PC-9 (cell line): ENCODE measurements at regions of chr2 and their contacts with region 1.

Region 1: GRCh38 chr2:171999604-172000469 is at the start of gene METAP1D:
- DNase-seq: peak; percentile 91 to 100
- H3K4me3 ChIP-seq: peak within 1 kb of the TSS; percentile 65
- H3K27ac ChIP-seq: peak within 1 kb of the TSS; percentile 77
- H3K4me1 ChIP-seq: peaks cover 17% of the 10 kb centered on the region
- H3K27me3 ChIP-seq: no peaks in the 10 kb centered on the region
- CTCF ChIP-seq: no peak; the same call in 1 of the 2 replicates
- total RNA-seq, gene METAP1D: 21.5 and 32.4 TPM in 2 replicates

Region 2: GRCh38 chr2:171922230-171923022 is 77.4 kb before region 1 on chr2 and contains the start of gene HAT1:
- CTCF ChIA-PET with region 1: no interaction called
- POLR2A ChIA-PET with region 1: interaction called, 4 read pairs
- intact Hi-C with region 1: loop called (anchors 1 kb)
- DNase-seq: peak; percentile 98 to 100
- H3K4me3 ChIP-seq: peak within 1 kb of the TSS; percentile 68
- H3K27ac ChIP-seq: peak within 1 kb of the TSS; percentile 52
- H3K4me1 ChIP-seq: peaks cover 25% of the 10 kb centered on the region
- H3K27me3 ChIP-seq: no peaks in the 10 kb centered on the region
- CTCF ChIP-seq: no peak
- total RNA-seq, gene HAT1: 96.4 and 132 TPM in 2 replicates

Region 3: GRCh38 chr2:172013396-172013795 is 13.6 kb after region 1 on chr2:
- CTCF ChIA-PET with region 1: interaction called, 17 read pairs
- POLR2A ChIA-PET with region 1: no interaction called
- intact Hi-C with region 1: loop called (anchors 1 kb)
- DNase-seq: no peak
- H3K4me3 ChIP-seq: no peak overlapping the region
- H3K27ac ChIP-seq: no peak overlapping the region
- H3K4me1 ChIP-seq: peaks cover 7% of the 10 kb centered on the region
- H3K27me3 ChIP-seq: no peaks in the 10 kb centered on the region
- CTCF ChIP-seq: no peak

Region 4: GRCh38 chr2:172021955-172022354 is 22.1 kb after region 1 on chr2:
- CTCF ChIA-PET with region 1: no interaction called
- POLR2A ChIA-PET with region 1: interaction called, 18 read pairs
- intact Hi-C with region 1: loop called (anchors 2 kb)
- DNase-seq: peak in 1 of 2 experiments; percentile 34
- H3K4me3 ChIP-seq: no peak overlapping the region
- H3K27ac ChIP-seq: peak overlapping the region; percentile 32
- H3K4me1 ChIP-seq: peaks cover 24% of the 10 kb centered on the region
- H3K27me3 ChIP-seq: no peaks in the 10 kb centered on the region
- CTCF ChIP-seq: no peak

Region 5: GRCh38 chr2:172046080-172046678 is 46.3 kb after region 1 on chr2:
- CTCF ChIA-PET with region 1: no interaction called
- POLR2A ChIA-PET with region 1: interaction called, 10 read pairs
- intact Hi-C with region 1: no loop called
- DNase-seq: no peak
- H3K4me3 ChIP-seq: no peak overlapping the region
- H3K27ac ChIP-seq: peak overlapping the region; percentile 7
- H3K4me1 ChIP-seq: peaks cover 12% of the 10 kb centered on the region; the same call in 1 of the 2 replicates
- H3K27me3 ChIP-seq: no peaks in the 10 kb centered on the region
- CTCF ChIP-seq: no peak

Region 6: DNA sequence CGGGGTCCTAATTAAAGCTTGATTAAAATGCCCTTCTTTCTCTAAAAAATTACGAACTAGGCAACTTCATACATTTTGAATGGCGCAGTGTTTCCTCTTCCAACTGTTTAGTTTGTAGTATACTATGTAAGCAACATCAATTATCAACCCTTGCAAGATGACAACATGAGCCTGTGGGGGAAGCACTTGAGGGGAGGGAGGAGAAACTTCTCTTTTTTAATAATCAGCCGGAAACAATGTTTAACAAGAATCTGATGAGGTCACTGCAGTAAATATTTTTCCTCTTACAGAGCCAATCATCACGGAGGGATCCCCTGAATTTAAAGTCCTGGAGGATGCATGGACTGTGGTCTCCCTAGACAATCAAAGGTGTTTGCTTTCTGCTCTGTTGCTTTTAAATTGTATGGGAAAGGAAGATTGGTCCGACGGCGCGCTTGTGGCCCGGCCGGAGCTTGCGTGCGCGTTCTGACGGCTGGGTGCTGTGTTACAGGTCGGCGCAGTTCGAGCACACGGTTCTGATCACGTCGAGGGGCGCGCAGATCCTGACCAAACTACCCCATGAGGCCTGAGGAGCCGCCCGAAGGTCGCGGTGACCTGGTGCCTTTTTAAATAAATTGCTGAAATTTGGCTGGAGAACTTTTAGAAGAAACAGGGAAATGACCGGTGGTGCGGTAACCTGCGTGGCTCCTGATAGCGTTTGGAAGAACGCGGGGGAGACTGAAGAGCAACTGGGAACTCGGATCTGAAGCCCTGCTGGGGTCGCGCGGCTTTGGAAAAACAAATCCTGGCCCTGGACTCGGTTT is 80.2 kb after region 1 on chr2:
- CTCF ChIA-PET with region 1: interaction called, 15 read pairs
- POLR2A ChIA-PET with region 1: no interaction called
- intact Hi-C with region 1: no loop called
- DNase-seq: no peak
- H3K4me3 ChIP-seq: no peak overlapping the region
- H3K27ac ChIP-seq: no peak overlapping the region
- H3K4me1 ChIP-seq: peaks cover 13% of the 10 kb centered on the region; the same call in 1 of the 2 replicates
- H3K27me3 ChIP-seq: no peaks in the 10 kb centered on the region
- CTCF ChIP-seq: no peak

Region 7: DNA sequence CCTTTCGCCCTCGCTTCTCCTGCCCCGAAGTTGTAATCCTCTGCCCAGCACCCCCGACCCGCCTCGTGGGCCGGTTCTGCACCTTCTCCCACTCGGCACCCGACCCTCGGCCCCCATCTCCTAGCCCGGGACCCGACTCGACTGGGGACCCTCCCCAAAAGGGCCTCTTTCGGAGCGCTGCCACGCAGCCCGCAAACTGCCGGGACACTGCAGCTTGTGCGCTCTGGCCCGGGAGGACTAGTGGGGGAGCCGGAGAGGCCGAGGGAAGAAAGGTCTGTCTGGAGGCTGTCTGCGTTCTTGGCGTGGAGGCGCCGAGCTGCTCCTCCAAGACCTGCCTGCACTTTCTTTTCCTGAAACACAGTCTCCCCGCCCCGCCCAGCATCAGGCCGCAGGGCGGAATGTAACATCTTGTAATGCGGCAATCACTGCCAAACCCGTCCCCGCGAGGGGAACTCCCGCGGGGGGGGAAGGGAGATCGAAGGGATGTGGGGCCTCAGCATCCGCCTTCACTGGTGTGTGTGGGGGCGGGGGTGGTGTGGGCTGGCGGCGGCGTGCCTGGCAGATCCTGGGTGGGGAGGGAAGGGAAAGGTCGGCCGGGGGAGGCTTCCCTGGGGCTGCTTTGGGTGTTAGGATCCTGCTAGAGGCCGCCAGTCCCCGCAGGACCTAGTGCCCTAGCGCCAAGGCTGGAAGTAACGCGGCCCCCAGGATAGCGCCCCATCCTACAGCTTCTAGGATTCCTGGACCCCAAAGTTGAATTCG is 95.5 kb after region 1 on chr2:
- CTCF ChIA-PET with region 1: interaction called, 4 read pairs
- POLR2A ChIA-PET with region 1: no interaction called
- intact Hi-C with region 1: loop called (anchors 1 kb)
- DNase-seq: peak; percentile 88 to 94
- H3K4me3 ChIP-seq: peak overlapping the region; percentile 73
- H3K27ac ChIP-seq: peak overlapping the region; percentile 12
- H3K4me1 ChIP-seq: peaks cover 45% of the 10 kb centered on the region
- H3K27me3 ChIP-seq: no peaks in the 10 kb centered on the region
- CTCF ChIP-seq: no peak

Region 8: GRCh38 chr2:172643142-172643541 is 643.3 kb after region 1 on chr2:
- CTCF ChIA-PET with region 1: no interaction called
- POLR2A ChIA-PET with region 1: no interaction called
- intact Hi-C with region 1: no loop called
- DNase-seq: peak in 1 of 2 experiments; percentile 55
- H3K4me3 ChIP-seq: no peak overlapping the region
- H3K27ac ChIP-seq: no peak overlapping the region
- H3K4me1 ChIP-seq: peaks cover 40% of the 10 kb centered on the region
- H3K27me3 ChIP-seq: no peaks in the 10 kb centered on the region
- CTCF ChIP-seq: no peak